CD8-positive, alpha-beta T cell (primary cell): ENCODE measurements at regions of chr10 and their contacts with region 1.

Region 1: GRCh38 chr10:72048450-72049124 is 39.8 kb downstream of the SPOCK2 start:
- DNase-seq: peak; percentile 80 to 95 (median 90)
- ATAC-seq: peak; percentile 98
- H3K4me3 ChIP-seq: no peak overlapping the region
- H3K4me3 Mint-ChIP-seq: no peak overlapping the region
- H3K27ac ChIP-seq: no peak overlapping the region
- H3K27ac Mint-ChIP-seq: no peak overlapping the region
- H3K4me1 ChIP-seq: no peaks in the 10 kb centered on the region
- H3K4me1 Mint-ChIP-seq: peaks cover 7% of the 10 kb centered on the region
- H3K27me3 ChIP-seq: no peaks in the 10 kb centered on the region
- H3K27me3 Mint-ChIP-seq: no peaks in the 10 kb centered on the region
- CTCF ChIP-seq: peak; percentile 99

Region 2: DNA sequence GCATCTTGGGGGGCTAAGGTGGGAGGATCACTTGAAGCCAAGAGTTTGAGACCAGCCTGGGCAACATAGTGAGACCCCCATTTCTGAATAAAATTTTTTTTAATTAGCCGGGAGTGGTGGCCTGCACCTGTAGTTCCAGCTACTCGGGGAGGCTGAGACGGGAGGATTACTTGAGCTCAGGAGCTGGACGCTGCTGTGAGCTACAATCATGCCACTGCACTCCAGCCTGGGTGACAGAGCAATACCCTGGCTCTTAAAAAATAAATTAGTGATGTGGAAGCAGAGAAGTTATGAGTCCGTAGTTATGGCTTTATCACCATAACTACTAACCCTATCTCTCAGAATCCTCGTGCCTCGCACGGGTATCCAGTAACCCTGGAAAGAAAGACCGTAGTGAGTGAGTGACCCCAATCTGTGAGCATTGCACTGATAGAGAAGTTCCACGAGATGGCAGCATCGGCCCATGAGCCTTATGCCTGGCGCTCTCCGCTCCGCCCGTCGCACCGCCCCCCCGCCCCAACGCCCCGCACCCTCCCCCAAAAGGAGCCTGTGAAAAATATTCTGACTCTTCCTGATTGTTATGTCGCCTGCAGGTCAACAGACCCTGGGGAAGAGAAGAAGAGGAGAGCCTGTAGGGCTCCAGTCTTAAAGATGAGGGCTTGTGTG is 734.4 kb before region 1 on chr10:
- CTCF ChIA-PET with region 1: no interaction called
- POLR2A ChIA-PET with region 1: no interaction called
- intact Hi-C with region 1: loop called in 1 of 2 experiments (anchors 5 kb)
- DNase-seq: peak in 8 of 9 experiments; percentile 41 to 80 (median 62)
- ATAC-seq: peak; percentile 45
- H3K4me3 ChIP-seq: no peak overlapping the region
- H3K4me3 Mint-ChIP-seq: no peak overlapping the region
- H3K27ac ChIP-seq: no peak overlapping the region
- H3K27ac Mint-ChIP-seq: no peak overlapping the region
- H3K4me1 ChIP-seq: peaks cover 6% of the 10 kb centered on the region
- H3K4me1 Mint-ChIP-seq: peaks cover 11% of the 10 kb centered on the region
- H3K27me3 ChIP-seq: no peaks in the 10 kb centered on the region
- H3K27me3 Mint-ChIP-seq: peaks cover 7% of the 10 kb centered on the region
- CTCF ChIP-seq: peak; percentile 86

Region 3: DNA sequence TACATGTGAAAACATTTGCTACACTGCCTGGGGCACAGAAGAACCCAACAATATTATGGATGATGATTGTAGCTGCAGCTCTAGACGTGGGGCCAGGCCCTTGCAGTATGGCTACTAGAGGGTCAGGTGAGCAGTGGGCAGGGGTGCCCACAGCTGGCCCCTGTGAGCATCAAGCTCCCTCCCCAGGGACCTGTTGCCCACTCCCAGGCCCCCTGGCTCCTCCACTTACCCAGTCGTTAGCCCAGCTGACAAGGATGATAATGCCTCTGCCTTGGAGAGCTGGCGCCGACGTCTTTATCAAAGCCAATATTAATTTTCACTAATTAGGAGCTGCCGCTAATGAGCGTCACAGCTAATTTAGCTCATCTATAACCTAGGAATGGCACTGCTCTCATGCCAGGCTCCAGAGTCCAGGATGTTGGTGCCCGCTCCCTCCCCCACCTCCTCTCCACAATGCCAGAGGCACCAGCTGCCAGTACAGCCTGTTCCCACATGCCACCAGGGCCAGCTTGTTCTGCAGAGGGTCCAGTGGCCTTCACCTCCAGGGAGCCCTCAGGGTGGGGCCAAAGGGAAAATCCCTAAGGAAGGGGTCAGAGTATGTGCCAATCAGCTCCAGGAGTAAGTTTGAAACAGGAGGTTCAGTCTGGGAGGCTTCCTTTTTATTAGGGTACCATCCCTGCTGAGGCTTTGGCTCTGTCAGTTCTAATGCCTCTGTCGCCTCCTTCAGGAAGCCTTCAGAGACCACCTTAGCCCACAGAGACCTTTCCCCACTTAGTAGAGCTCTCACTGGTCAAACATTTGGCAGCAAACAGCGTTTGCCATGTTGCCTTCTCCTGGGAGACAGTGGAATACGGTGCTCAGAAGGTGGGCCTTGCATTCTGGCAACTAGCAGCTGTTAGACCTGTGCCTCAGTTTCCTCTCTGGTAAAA is 574.7 kb before region 1 on chr10:
- CTCF ChIA-PET with region 1: no interaction called
- POLR2A ChIA-PET with region 1: no interaction called
- intact Hi-C with region 1: no loop called
- DNase-seq: no peak
- ATAC-seq: no peak
- H3K4me3 ChIP-seq: no peak overlapping the region
- H3K4me3 Mint-ChIP-seq: no peak overlapping the region
- H3K27ac ChIP-seq: no peak overlapping the region
- H3K27ac Mint-ChIP-seq: no peak overlapping the region
- H3K4me1 ChIP-seq: no peaks in the 10 kb centered on the region
- H3K4me1 Mint-ChIP-seq: peaks cover 6% of the 10 kb centered on the region
- H3K27me3 ChIP-seq: no peaks in the 10 kb centered on the region
- H3K27me3 Mint-ChIP-seq: peaks cover 12% of the 10 kb centered on the region
- CTCF ChIP-seq: no peak

Region 4: GRCh38 chr10:72061491-72061890 is 12.9 kb after region 1 on chr10:
- CTCF ChIA-PET with region 1: interaction called, 83 read pairs
- POLR2A ChIA-PET with region 1: interaction called, 11 read pairs
- intact Hi-C with region 1: no loop called
- DNase-seq: peak in 1 of 9 experiments; percentile 50
- ATAC-seq: peak; percentile 16
- H3K4me3 ChIP-seq: no peak overlapping the region
- H3K4me3 Mint-ChIP-seq: no peak overlapping the region
- H3K27ac ChIP-seq: peak overlapping the region in 1 of 2 experiments; percentile 14
- H3K27ac Mint-ChIP-seq: peak overlapping the region; percentile 83
- H3K4me1 ChIP-seq: peaks cover 8% of the 10 kb centered on the region
- H3K4me1 Mint-ChIP-seq: peaks cover 46% of the 10 kb centered on the region
- H3K27me3 ChIP-seq: no peaks in the 10 kb centered on the region
- H3K27me3 Mint-ChIP-seq: no peaks in the 10 kb centered on the region
- CTCF ChIP-seq: no peak

Region 5: DNA sequence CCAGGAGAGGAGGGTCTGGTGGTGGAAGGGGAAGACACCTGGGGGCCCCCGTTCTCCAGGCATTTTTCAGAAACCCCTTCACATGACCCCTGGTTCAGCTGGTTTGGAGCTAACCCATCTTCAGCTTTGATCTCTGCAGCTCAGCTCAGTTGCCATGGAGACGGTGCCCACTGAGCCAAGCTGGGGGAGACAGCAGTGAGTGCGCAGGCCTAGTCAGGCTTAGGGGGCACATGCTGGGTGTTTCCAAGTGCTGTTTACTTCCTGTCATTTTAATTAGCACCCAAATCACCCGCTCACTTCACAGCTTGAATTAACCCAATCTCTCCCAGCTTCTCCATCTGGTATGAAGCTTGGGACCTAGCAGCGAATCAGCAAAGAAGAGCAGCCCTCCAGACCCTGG is 30.8 kb after region 1 on chr10:
- CTCF ChIA-PET with region 1: interaction called, 14 read pairs
- POLR2A ChIA-PET with region 1: no interaction called
- intact Hi-C with region 1: no loop called
- DNase-seq: peak; percentile 69 to 97 (median 88)
- ATAC-seq: peak; percentile 63
- H3K4me3 ChIP-seq: peak overlapping the region; percentile 32 to 36
- H3K4me3 Mint-ChIP-seq: peak overlapping the region; percentile 97
- H3K27ac ChIP-seq: peak overlapping the region; percentile 49 to 69
- H3K27ac Mint-ChIP-seq: peak overlapping the region; percentile 97
- H3K4me1 ChIP-seq: peaks cover 96% of the 10 kb centered on the region
- H3K4me1 Mint-ChIP-seq: peaks cover 94% of the 10 kb centered on the region
- H3K27me3 ChIP-seq: no peaks in the 10 kb centered on the region
- H3K27me3 Mint-ChIP-seq: no peaks in the 10 kb centered on the region
- CTCF ChIP-seq: no peak

Region 6: DNA sequence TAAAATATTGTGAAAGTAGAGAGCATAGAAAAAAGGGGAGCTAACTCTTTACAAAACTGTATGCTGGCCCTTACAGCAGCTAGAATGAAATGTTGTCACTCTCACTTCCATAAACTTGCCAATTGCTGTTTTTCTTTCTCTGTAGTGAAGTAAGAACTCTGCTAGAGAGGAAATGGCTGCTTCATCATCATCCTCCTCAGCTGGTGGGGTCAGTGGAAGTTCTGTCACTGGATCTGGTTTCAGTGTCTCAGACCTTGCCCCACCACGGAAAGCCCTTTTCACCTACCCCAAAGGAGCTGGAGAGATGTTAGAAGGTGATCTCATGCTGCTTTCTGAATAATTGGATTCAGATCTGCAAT is 175.1 kb after region 1 on chr10:
- CTCF ChIA-PET with region 1: interaction called, 14 read pairs
- POLR2A ChIA-PET with region 1: no interaction called
- intact Hi-C with region 1: loop called (anchors 1 to 2 kb)
- DNase-seq: no peak
- ATAC-seq: no peak
- H3K4me3 ChIP-seq: no peak overlapping the region
- H3K4me3 Mint-ChIP-seq: no peak overlapping the region
- H3K27ac ChIP-seq: no peak overlapping the region
- H3K27ac Mint-ChIP-seq: peak overlapping the region; percentile 39
- H3K4me1 ChIP-seq: peaks cover 61% of the 10 kb centered on the region
- H3K4me1 Mint-ChIP-seq: peaks cover 59% of the 10 kb centered on the region
- H3K27me3 ChIP-seq: no peaks in the 10 kb centered on the region
- H3K27me3 Mint-ChIP-seq: no peaks in the 10 kb centered on the region
- CTCF ChIP-seq: no peak